GM12878 (cell line): ENCODE measurements at regions of chr17 and their contacts with region 1.

Region 1: GRCh38 chr17:35531160-35531559 is 6.3 kb downstream of the SLFN12L start:
- DNase-seq: no peak
- ATAC-seq: no peak
- H3K4me3 ChIP-seq: no peak overlapping the region
- H3K27ac ChIP-seq: no peak overlapping the region
- H3K4me1 ChIP-seq: peaks cover 4% of the 10 kb centered on the region; the same call in 1 of the 2 replicates
- H3K27me3 ChIP-seq: no peaks in the 10 kb centered on the region
- CTCF ChIP-seq: no peak
- EP300 ChIP-seq: no peak
- POLR2A ChIP-seq: no peak
- RAD21 ChIP-seq: no peak

Region 2: DNA sequence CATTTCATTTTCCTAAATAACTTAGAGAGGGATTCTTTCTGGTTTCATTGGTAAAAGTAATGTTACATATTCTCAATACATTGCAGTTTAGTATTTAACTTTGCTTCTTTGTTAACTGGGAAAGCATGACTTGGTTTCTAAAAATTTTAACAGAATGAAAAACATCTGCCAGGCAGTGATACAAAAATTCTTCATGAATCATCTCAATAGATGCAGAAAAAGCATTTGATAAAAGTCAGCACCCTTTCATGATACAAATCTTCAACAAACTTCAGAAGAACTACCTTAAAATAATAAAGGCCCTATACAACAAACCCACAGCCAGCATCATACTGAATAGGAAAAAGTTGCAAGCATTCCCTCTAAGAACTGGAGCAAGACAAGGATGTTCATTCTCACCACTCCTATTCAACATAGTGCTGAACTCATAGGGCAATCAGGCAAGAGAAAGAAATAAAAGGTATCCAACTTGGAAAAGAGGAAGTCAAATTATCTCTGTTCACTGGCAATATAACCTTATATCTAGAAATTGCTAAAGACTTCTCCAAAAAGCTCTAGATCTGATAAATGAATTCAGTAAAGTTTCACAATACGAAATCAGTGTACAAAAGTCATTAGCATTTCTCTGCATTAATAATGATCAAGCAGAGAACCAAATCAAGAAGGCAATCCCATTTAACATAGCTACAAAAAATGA is 237.9 kb before region 1 on chr17:
- CTCF ChIA-PET with region 1: no interaction called
- POLR2A ChIA-PET with region 1: no interaction called
- RAD21 ChIA-PET with region 1: no interaction called
- SMC1A ChIA-PET with region 1: no interaction called
- in situ Hi-C with region 1: no loop called
- intact Hi-C with region 1: no loop called
- DNase-seq: no peak
- ATAC-seq: no peak
- H3K4me3 ChIP-seq: no peak overlapping the region
- H3K27ac ChIP-seq: no peak overlapping the region
- H3K4me1 ChIP-seq: peaks cover 1% of the 10 kb centered on the region
- H3K27me3 ChIP-seq: peaks cover 0 to 3% of the 10 kb centered on the region in 2 experiments; a peak in 1 of 4 replicates
- CTCF ChIP-seq: no peak
- EP300 ChIP-seq: no peak
- POLR2A ChIP-seq: no peak
- RAD21 ChIP-seq: no peak

Region 3: DNA sequence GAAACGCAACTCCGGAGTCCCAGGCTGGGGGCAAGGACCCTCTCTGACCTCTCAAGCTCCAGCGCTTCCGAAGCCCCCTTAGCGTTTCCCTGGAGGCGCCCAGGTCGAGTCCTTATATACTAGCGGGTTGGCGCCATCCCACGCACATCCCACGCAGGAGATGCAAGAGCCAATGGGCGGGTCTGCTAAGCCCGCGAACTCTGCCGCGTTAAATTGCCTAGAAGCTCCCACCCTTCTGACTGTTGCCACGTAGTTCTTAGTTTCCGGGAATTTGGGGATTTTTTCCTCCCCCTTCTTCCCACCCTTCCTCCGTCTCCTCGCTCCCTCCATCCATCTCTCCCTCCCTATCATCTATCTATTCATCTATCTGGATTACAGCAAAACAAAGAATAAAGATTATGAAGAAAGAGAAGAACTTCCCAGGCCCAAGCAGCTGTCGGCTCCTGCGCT is 157.6 kb before region 1 on chr17 and contains the start of gene SLFN11:
- CTCF ChIA-PET with region 1: interaction called, 6 read pairs
- POLR2A ChIA-PET with region 1: interaction called, 6 read pairs
- RAD21 ChIA-PET with region 1: interaction called, 19 read pairs
- SMC1A ChIA-PET with region 1: interaction called, 4 read pairs
- in situ Hi-C with region 1: loop called (anchors 5 kb)
- intact Hi-C with region 1: no loop called
- DNase-seq: peak; percentile 30
- ATAC-seq: peak; percentile 80
- H3K4me3 ChIP-seq: peak within 1 kb of the TSS; percentile 70
- H3K27ac ChIP-seq: no peak within 1 kb of the TSS; the same call in 1 of the 2 replicates
- H3K4me1 ChIP-seq: peaks cover 3% of the 10 kb centered on the region
- H3K27me3 ChIP-seq: peaks cover 0 to 9% of the 10 kb centered on the region in 2 experiments; a peak in 3 of 4 replicates
- CTCF ChIP-seq: no peak
- EP300 ChIP-seq: no peak
- POLR2A ChIP-seq: peak; percentile 91
- RAD21 ChIP-seq: no peak
- polyA plus RNA-seq, gene SLFN11: 7.9 to 8.0 TPM

Region 4: GRCh38 chr17:35448214-35448898 is 82.8 kb before region 1 on chr17 and contains the start of gene SLFN13:
- CTCF ChIA-PET with region 1: interaction called, 24 read pairs
- POLR2A ChIA-PET with region 1: interaction called, 3 read pairs
- RAD21 ChIA-PET with region 1: interaction called, 28 read pairs
- SMC1A ChIA-PET with region 1: interaction called, 26 read pairs
- in situ Hi-C with region 1: no loop called
- intact Hi-C with region 1: loop called (anchors 2 kb)
- DNase-seq: peak; percentile 78
- ATAC-seq: peak; percentile 90
- H3K4me3 ChIP-seq: peak within 1 kb of the TSS; percentile 81
- H3K27ac ChIP-seq: peak within 1 kb of the TSS; percentile 99
- H3K4me1 ChIP-seq: peaks cover 3% of the 10 kb centered on the region
- H3K27me3 ChIP-seq: no peaks in the 10 kb centered on the region
- CTCF ChIP-seq: no peak
- EP300 ChIP-seq: peak; percentile 28 to 71; a peak in 2 of 4 replicates
- POLR2A ChIP-seq: peak; percentile 83
- RAD21 ChIP-seq: no peak
- polyA plus RNA-seq, gene SLFN13: 12.4 to 20.2 TPM

Region 5: DNA sequence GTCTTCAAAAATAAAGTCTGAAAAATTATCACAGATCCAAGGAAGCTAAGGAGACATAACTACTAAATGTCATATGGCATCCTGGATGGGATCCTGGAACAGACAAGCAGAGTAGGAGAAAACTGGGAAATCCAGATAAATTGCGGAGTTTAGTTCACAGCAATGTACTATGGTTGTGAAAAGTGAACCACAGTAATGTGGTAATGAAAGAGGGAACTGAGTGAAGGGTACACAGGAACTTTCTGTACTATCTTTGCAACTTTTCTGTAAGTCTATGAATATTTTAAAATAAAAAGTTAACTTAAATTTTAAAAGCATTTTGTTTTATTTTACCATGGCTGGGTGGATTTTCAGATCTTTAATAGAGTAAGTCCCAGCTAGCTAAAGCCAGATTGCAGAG is 10.0 kb before region 1 on chr17:
- CTCF ChIA-PET with region 1: interaction called, 16 read pairs
- POLR2A ChIA-PET with region 1: interaction called, 7 read pairs
- RAD21 ChIA-PET with region 1: interaction called, 5 read pairs
- SMC1A ChIA-PET with region 1: interaction called, 9 read pairs
- in situ Hi-C with region 1: no loop called
- intact Hi-C with region 1: no loop called
- DNase-seq: no peak
- ATAC-seq: peak; percentile 32
- H3K4me3 ChIP-seq: no peak overlapping the region
- H3K27ac ChIP-seq: no peak overlapping the region
- H3K4me1 ChIP-seq: 0 out of 2 replicates have a peak, but pooled peaks cover 3% of the 10 kb centered on the region
- H3K27me3 ChIP-seq: no peaks in the 10 kb centered on the region
- CTCF ChIP-seq: no peak
- EP300 ChIP-seq: no peak
- POLR2A ChIP-seq: no peak
- RAD21 ChIP-seq: no peak

Region 6: GRCh38 chr17:35645923-35646322 is 114.8 kb after region 1 on chr17:
- CTCF ChIA-PET with region 1: no interaction called
- POLR2A ChIA-PET with region 1: no interaction called
- RAD21 ChIA-PET with region 1: no interaction called
- SMC1A ChIA-PET with region 1: no interaction called
- in situ Hi-C with region 1: no loop called
- intact Hi-C with region 1: no loop called
- DNase-seq: no peak
- ATAC-seq: no peak
- H3K4me3 ChIP-seq: no peak overlapping the region
- H3K27ac ChIP-seq: no peak overlapping the region
- H3K4me1 ChIP-seq: no peaks in the 10 kb centered on the region
- H3K27me3 ChIP-seq: no peaks in the 10 kb centered on the region
- CTCF ChIP-seq: no peak
- EP300 ChIP-seq: no peak
- POLR2A ChIP-seq: no peak
- RAD21 ChIP-seq: no peak